CD8-positive, alpha-beta T cell (primary cell): ENCODE measurements at regions of chr18 and their contacts with region 1.

Region 1: GRCh38 chr18:74495581-74496507 is at the start of gene CNDP2:
- DNase-seq: peak; percentile 93 to 99 (median 99)
- ATAC-seq: peak; percentile 69
- H3K4me3 ChIP-seq: peak within 1 kb of the TSS; percentile 81
- H3K4me3 Mint-ChIP-seq: peak within 1 kb of the TSS; percentile 94
- H3K27ac ChIP-seq: peak within 1 kb of the TSS; percentile 87 to 90
- H3K27ac Mint-ChIP-seq: peak within 1 kb of the TSS; percentile 97
- H3K4me1 ChIP-seq: peaks cover 37% of the 10 kb centered on the region
- H3K4me1 Mint-ChIP-seq: peaks cover 58% of the 10 kb centered on the region
- H3K27me3 ChIP-seq: no peaks in the 10 kb centered on the region
- H3K27me3 Mint-ChIP-seq: no peaks in the 10 kb centered on the region
- CTCF ChIP-seq: no peak
- total RNA-seq, gene CNDP2: 51.7 to 55.8 TPM

Region 2: DNA sequence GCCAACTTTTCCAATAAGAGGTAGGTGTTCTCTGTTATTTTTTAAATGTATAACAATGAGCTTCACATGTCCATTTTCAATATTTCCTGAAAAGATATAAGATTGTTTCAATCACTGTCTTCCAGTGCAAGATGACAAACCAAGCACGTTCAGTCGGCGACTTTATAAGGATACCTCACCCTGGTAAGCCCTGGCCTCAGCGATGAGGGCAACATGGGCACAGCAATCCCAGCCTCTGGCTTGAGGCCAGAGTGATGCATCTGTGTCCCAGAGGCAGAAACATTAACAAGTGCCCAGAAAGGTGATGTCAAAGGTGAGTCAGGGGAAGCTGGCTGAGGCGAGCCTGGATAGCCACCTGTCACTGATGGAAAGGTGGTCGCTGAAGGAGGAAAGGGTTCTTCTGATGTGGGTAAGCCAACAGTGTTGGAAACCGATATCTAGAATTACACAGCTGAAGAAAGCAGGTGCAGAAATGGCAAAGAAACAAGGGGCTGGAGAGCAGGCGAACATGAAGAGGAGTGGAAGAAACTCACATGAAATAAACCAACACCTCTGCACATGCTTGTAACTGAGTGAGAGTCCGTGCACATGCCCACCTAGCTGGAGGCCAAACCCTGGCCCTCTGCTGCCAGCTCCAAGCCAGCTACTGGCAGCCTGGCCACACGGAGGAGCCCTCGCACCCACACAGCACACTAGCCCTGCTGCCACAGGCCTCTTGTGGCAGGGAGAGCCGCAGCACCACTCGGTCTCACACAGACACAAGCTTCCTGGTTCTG is 413.7 kb before region 1 on chr18:
- CTCF ChIA-PET with region 1: no interaction called
- POLR2A ChIA-PET with region 1: no interaction called
- intact Hi-C with region 1: loop called in 1 of 2 experiments (anchors 10 kb)
- DNase-seq: peak; percentile 25 to 82 (median 64)
- ATAC-seq: peak; percentile 96
- H3K4me3 ChIP-seq: peak overlapping the region; percentile 9 to 28
- H3K4me3 Mint-ChIP-seq: peak overlapping the region; percentile 82
- H3K27ac ChIP-seq: peak overlapping the region; percentile 39 to 65
- H3K27ac Mint-ChIP-seq: peak overlapping the region; percentile 98
- H3K4me1 ChIP-seq: peaks cover 18% of the 10 kb centered on the region
- H3K4me1 Mint-ChIP-seq: peaks cover 17% of the 10 kb centered on the region
- H3K27me3 ChIP-seq: no peaks in the 10 kb centered on the region
- H3K27me3 Mint-ChIP-seq: no peaks in the 10 kb centered on the region
- CTCF ChIP-seq: no peak

Region 3: DNA sequence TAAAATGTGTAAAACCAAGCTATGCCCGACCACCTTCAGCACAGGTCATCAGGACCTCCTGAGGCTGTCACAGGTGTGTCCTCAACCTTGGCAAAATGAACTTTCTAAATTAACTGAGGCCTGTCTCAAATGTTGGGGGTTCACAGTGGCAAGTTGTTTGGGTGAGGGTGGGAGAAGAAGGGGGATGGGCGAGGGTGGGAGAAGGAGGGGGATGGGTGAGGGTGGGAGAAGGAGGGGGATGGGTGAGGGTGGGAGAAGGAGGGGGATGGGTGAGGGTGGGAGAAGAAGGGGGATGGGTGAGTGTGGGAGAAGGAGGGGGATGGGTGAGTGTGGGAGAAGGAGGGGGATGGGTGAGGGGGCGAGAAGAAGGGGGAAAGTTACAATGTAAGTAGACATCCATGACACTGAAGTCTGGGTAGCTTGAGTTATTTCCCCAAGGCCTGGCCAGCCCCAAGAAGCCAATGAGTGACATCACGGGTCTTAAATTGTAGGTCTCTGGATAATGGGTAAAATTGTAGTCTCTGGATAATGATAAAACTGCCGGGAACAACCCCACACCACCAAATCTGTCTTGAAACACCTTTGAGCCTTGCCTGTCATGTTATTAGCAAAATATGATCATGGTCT is 291.2 kb before region 1 on chr18:
- CTCF ChIA-PET with region 1: interaction called, 13 read pairs
- POLR2A ChIA-PET with region 1: no interaction called
- intact Hi-C with region 1: no loop called
- DNase-seq: peak in 2 of 9 experiments; percentile 34 to 35
- ATAC-seq: no peak
- H3K4me3 ChIP-seq: no peak overlapping the region
- H3K4me3 Mint-ChIP-seq: no peak overlapping the region
- H3K27ac ChIP-seq: no peak overlapping the region
- H3K27ac Mint-ChIP-seq: no peak overlapping the region
- H3K4me1 ChIP-seq: no peaks in the 10 kb centered on the region
- H3K4me1 Mint-ChIP-seq: no peaks in the 10 kb centered on the region
- H3K27me3 ChIP-seq: no peaks in the 10 kb centered on the region
- H3K27me3 Mint-ChIP-seq: peaks cover 5% of the 10 kb centered on the region
- CTCF ChIP-seq: no peak

Region 4: GRCh38 chr18:74353169-74353775 is 142.6 kb before region 1 on chr18:
- CTCF ChIA-PET with region 1: interaction called, 340 read pairs
- POLR2A ChIA-PET with region 1: interaction called, 33 read pairs
- intact Hi-C with region 1: loop called (anchors 1 kb)
- DNase-seq: peak; percentile 27 to 83 (median 57)
- ATAC-seq: peak; percentile 92
- H3K4me3 ChIP-seq: no peak overlapping the region
- H3K4me3 Mint-ChIP-seq: no peak overlapping the region
- H3K27ac ChIP-seq: no peak overlapping the region
- H3K27ac Mint-ChIP-seq: no peak overlapping the region
- H3K4me1 ChIP-seq: peaks cover 4% of the 10 kb centered on the region
- H3K4me1 Mint-ChIP-seq: peaks cover 11% of the 10 kb centered on the region
- H3K27me3 ChIP-seq: no peaks in the 10 kb centered on the region
- H3K27me3 Mint-ChIP-seq: no peaks in the 10 kb centered on the region
- CTCF ChIP-seq: peak; percentile 77

Region 5: DNA sequence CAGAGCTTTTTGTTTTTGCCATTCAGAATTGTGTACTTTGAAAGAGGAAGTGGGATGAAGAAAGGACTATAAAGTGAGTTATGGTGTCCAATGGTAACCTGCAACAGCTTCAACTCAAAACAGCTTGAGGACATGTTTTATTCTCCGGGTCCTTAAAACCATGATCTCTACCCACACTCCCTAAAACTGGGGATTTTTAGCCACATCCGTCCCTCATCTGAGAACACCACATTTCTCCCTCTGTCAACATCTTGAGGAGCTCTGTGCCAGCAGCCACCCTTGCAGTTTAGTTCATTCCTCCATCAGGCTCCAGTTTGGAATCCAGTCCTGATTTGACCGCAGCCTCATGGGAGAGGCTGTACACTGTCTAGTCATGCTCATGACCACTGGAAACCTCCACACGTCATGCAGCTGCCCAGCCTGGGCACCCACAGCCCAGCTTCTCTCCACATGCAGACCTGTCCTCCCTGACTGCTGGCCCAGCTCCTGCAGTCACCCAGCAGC is 117.6 kb before region 1 on chr18:
- CTCF ChIA-PET with region 1: interaction called, 39 read pairs
- POLR2A ChIA-PET with region 1: interaction called, 18 read pairs
- intact Hi-C with region 1: loop called (anchors 1 to 5 kb)
- DNase-seq: peak in 5 of 9 experiments; percentile 18 to 80 (median 51)
- ATAC-seq: peak; percentile 35
- H3K4me3 ChIP-seq: peak overlapping the region in 1 of 2 experiments; percentile 41
- H3K4me3 Mint-ChIP-seq: peak overlapping the region; percentile 64
- H3K27ac ChIP-seq: peak overlapping the region in 1 of 2 experiments; percentile 56
- H3K27ac Mint-ChIP-seq: peak overlapping the region; percentile 88
- H3K4me1 ChIP-seq: peaks cover 52% of the 10 kb centered on the region
- H3K4me1 Mint-ChIP-seq: peaks cover 58% of the 10 kb centered on the region
- H3K27me3 ChIP-seq: no peaks in the 10 kb centered on the region
- H3K27me3 Mint-ChIP-seq: no peaks in the 10 kb centered on the region
- CTCF ChIP-seq: no peak

Region 6: GRCh38 chr18:74400813-74401212 is 95.0 kb before region 1 on chr18:
- CTCF ChIA-PET with region 1: no interaction called
- POLR2A ChIA-PET with region 1: no interaction called
- intact Hi-C with region 1: no loop called
- DNase-seq: no peak
- ATAC-seq: no peak
- H3K4me3 ChIP-seq: no peak overlapping the region
- H3K4me3 Mint-ChIP-seq: no peak overlapping the region
- H3K27ac ChIP-seq: no peak overlapping the region
- H3K27ac Mint-ChIP-seq: no peak overlapping the region
- H3K4me1 ChIP-seq: peaks cover 4% of the 10 kb centered on the region
- H3K4me1 Mint-ChIP-seq: peaks cover 22% of the 10 kb centered on the region
- H3K27me3 ChIP-seq: no peaks in the 10 kb centered on the region
- H3K27me3 Mint-ChIP-seq: peaks cover 2% of the 10 kb centered on the region
- CTCF ChIP-seq: no peak

Region 7: GRCh38 chr18:74597662-74598349 is 102.0 kb after region 1 on chr18 and contains the start of gene ZNF407:
- CTCF ChIA-PET with region 1: interaction called, 3 read pairs
- POLR2A ChIA-PET with region 1: interaction called, 11 read pairs
- intact Hi-C with region 1: loop called (anchors 1 kb)
- DNase-seq: peak; percentile 76 to 94 (median 86)
- ATAC-seq: peak; percentile 76
- H3K4me3 ChIP-seq: peak within 1 kb of the TSS; percentile 94 to 98
- H3K4me3 Mint-ChIP-seq: peak within 1 kb of the TSS; percentile 95
- H3K27ac ChIP-seq: peak within 1 kb of the TSS; percentile 94 to 98
- H3K27ac Mint-ChIP-seq: peak within 1 kb of the TSS; percentile 99
- H3K4me1 ChIP-seq: peaks cover 25% of the 10 kb centered on the region
- H3K4me1 Mint-ChIP-seq: peaks cover 50% of the 10 kb centered on the region
- H3K27me3 ChIP-seq: no peaks in the 10 kb centered on the region
- H3K27me3 Mint-ChIP-seq: no peaks in the 10 kb centered on the region
- CTCF ChIP-seq: no peak
- total RNA-seq, gene ZNF407: 18.4 to 18.5 TPM